B cell (primary cell): ENCODE measurements at regions of chr2 and their contacts with region 1.

Region 1: GRCh38 chr2:201118121-201118960 is 2.4 kb downstream of the CFLAR start:
- DNase-seq: peak; percentile 95
- ATAC-seq: peak; percentile 64
- H3K4me3 ChIP-seq: peak overlapping the region; percentile 66 to 100 (median 97)
- H3K4me3 Mint-ChIP-seq: peak overlapping the region; percentile 98
- H3K27ac ChIP-seq: peak overlapping the region; percentile 94 to 96
- H3K27ac Mint-ChIP-seq: peak overlapping the region; percentile 98
- H3K4me1 ChIP-seq: peaks cover 63 to 72% of the 10 kb centered on the region in 2 donors
- H3K4me1 Mint-ChIP-seq: peaks cover 72% of the 10 kb centered on the region
- H3K27me3 ChIP-seq: no peaks in the 10 kb centered on the region
- H3K27me3 Mint-ChIP-seq: no peaks in the 10 kb centered on the region
- CTCF ChIP-seq: peak; percentile 55

Region 2: GRCh38 chr2:200713003-200713703 is 405.2 kb before region 1 on chr2:
- CTCF ChIA-PET with region 1: interaction called, 3 read pairs
- POLR2A ChIA-PET with region 1: interaction called, 3 read pairs
- intact Hi-C with region 1: loop called (anchors 5 kb)
- DNase-seq: peak; percentile 91
- ATAC-seq: peak; percentile 99
- H3K4me3 ChIP-seq: peak overlapping the region in 4 of 5 experiments; percentile 5 to 52 (median 16)
- H3K4me3 Mint-ChIP-seq: peak overlapping the region; percentile 83
- H3K27ac ChIP-seq: peak overlapping the region; percentile 82 to 93
- H3K27ac Mint-ChIP-seq: peak overlapping the region; percentile 98
- H3K4me1 ChIP-seq: peaks cover 5 to 6% of the 10 kb centered on the region in 2 donors
- H3K4me1 Mint-ChIP-seq: peaks cover 15% of the 10 kb centered on the region
- H3K27me3 ChIP-seq: no peaks in the 10 kb centered on the region
- H3K27me3 Mint-ChIP-seq: peaks cover 10% of the 10 kb centered on the region
- CTCF ChIP-seq: peak; percentile 83

Region 3: GRCh38 chr2:200888704-200889625 is 229.4 kb before region 1 on chr2 and contains the starts of genes NIF3L1 and PPIL3:
- CTCF ChIA-PET with region 1: no interaction called
- POLR2A ChIA-PET with region 1: interaction called, 6 read pairs
- intact Hi-C with region 1: loop called (anchors 2 kb)
- DNase-seq: peak; percentile 98
- ATAC-seq: peak; percentile 81
- H3K4me3 ChIP-seq: peak within 1 kb of the TSS; percentile 76 to 99 (median 87)
- H3K4me3 Mint-ChIP-seq: peak within 1 kb of the TSS; percentile 95
- H3K27ac ChIP-seq: peak within 1 kb of the TSS; percentile 90 to 93
- H3K27ac Mint-ChIP-seq: peak within 1 kb of the TSS; percentile 98
- H3K4me1 ChIP-seq: peaks cover 15 to 28% of the 10 kb centered on the region in 2 donors
- H3K4me1 Mint-ChIP-seq: peaks cover 43% of the 10 kb centered on the region
- H3K27me3 ChIP-seq: no peaks in the 10 kb centered on the region
- H3K27me3 Mint-ChIP-seq: no peaks in the 10 kb centered on the region
- CTCF ChIP-seq: no peak
- total RNA-seq, gene NIF3L1: 26.7 and 32.9 TPM in 2 replicates
- total RNA-seq, gene PPIL3: 55.5 and 57.9 TPM in 2 replicates

Region 4: GRCh38 chr2:201130524-201131186 is 12.3 kb after region 1 on chr2:
- CTCF ChIA-PET with region 1: interaction called, 20 read pairs
- POLR2A ChIA-PET with region 1: interaction called, 16 read pairs
- intact Hi-C with region 1: loop called (anchors 1 kb)
- DNase-seq: peak; percentile 31
- ATAC-seq: no peak
- H3K4me3 ChIP-seq: no peak overlapping the region
- H3K4me3 Mint-ChIP-seq: peak overlapping the region; percentile 60
- H3K27ac ChIP-seq: peak overlapping the region; percentile 24 to 45
- H3K27ac Mint-ChIP-seq: peak overlapping the region; percentile 82
- H3K4me1 ChIP-seq: peaks cover 63 to 67% of the 10 kb centered on the region in 2 donors
- H3K4me1 Mint-ChIP-seq: peaks cover 71% of the 10 kb centered on the region
- H3K27me3 ChIP-seq: no peaks in the 10 kb centered on the region
- H3K27me3 Mint-ChIP-seq: no peaks in the 10 kb centered on the region
- CTCF ChIP-seq: no peak

Region 5: DNA sequence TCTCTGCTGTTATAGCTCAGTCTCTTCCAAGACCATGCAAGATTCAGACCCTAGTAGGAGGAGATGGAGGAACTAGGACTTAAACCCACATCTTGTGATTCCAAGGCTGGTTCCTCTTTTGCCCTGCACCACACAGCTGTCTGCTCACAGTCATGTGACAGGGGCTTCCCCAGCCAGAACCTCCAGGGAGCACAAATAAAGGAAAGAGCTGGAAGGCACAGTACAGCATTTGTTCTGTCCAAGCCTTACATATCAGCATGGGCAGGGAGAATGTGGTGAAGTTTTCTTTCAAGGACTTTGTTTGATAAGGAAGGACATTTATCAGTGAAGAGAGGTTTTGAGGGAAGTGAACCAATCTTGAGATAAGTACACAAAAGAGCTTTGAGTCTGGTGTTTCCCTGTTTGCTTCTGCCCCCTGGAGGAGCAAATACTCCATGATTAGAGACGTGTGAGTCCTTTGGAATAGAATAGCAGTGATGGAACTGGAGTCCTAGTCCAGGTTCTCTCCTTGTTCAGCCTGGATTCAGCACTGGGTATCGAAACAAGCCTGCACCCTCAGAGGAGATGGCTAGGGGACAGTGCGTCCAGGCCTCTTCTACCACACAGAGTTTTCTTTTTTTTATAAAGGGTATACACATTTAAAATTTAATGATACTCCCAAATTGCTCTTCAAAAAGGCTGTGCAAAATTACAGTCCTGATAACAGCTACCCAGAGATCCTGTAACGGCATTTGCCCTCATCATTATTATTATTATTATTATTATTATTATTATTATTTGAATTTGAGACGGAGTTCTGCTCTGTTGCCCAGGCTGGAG is 40.0 kb after region 1 on chr2:
- CTCF ChIA-PET with region 1: interaction called, 100 read pairs
- POLR2A ChIA-PET with region 1: interaction called, 55 read pairs
- intact Hi-C with region 1: loop called (anchors 1 kb)
- DNase-seq: peak; percentile 95
- ATAC-seq: peak; percentile 91
- H3K4me3 ChIP-seq: peak overlapping the region in 1 of 5 experiments; percentile 9
- H3K4me3 Mint-ChIP-seq: peak overlapping the region; percentile 64
- H3K27ac ChIP-seq: peak overlapping the region; percentile 84 to 85
- H3K27ac Mint-ChIP-seq: peak overlapping the region; percentile 90
- H3K4me1 ChIP-seq: peaks cover 43 to 47% of the 10 kb centered on the region in 2 donors
- H3K4me1 Mint-ChIP-seq: peaks cover 52% of the 10 kb centered on the region
- H3K27me3 ChIP-seq: no peaks in the 10 kb centered on the region
- H3K27me3 Mint-ChIP-seq: no peaks in the 10 kb centered on the region
- CTCF ChIP-seq: peak; percentile 69

Region 6: GRCh38 chr2:201257956-201258665 is 139.8 kb after region 1 on chr2:
- CTCF ChIA-PET with region 1: interaction called, 3 read pairs
- POLR2A ChIA-PET with region 1: interaction called, 14 read pairs
- intact Hi-C with region 1: loop called (anchors 2 kb)
- DNase-seq: peak; percentile 94
- ATAC-seq: peak; percentile 67
- H3K4me3 ChIP-seq: peak overlapping the region; percentile 39 to 90 (median 58)
- H3K4me3 Mint-ChIP-seq: peak overlapping the region; percentile 87
- H3K27ac ChIP-seq: peak overlapping the region; percentile 97 to 98
- H3K27ac Mint-ChIP-seq: peak overlapping the region; percentile 99
- H3K4me1 ChIP-seq: peaks cover 58 to 84% of the 10 kb centered on the region in 2 donors
- H3K4me1 Mint-ChIP-seq: peaks cover 73% of the 10 kb centered on the region
- H3K27me3 ChIP-seq: no peaks in the 10 kb centered on the region
- H3K27me3 Mint-ChIP-seq: no peaks in the 10 kb centered on the region
- CTCF ChIP-seq: no peak

Region 7: DNA sequence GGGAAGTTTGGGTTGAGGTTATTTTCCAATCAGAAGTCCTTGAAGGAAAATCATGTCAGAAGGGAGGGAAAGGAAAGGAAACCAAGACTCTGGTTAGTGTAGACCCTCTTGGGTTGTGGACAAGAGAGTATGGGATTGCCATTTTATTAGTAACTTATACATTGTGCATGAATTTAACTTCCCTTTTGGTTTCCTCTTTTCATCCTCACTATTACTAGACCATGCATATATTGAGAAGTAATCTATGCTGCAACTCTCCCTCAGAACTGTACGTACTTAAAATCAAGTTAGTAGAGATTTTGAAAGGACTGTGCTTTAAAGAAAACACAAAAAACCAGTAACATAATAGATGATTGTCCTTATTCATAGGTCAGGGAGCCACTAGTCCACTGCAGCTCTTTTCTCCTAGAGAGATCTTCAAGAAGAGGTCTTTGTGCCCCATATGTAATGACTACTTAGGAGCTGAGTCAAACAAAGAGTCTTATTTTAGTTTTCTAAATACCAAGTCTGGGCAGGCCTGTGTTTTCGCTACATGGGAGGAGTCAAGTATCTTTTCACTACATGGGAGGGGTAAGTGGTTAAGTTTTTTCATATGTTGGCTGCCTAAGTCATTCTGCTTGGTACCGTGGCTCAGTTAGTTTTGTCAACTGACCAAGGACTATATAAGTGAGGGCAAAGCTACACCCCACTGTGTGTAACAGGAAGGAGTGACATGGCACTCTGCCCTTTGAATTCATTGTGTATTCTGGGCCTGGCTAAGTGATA is 1491.2 kb after region 1 on chr2:
- CTCF ChIA-PET with region 1: no interaction called
- POLR2A ChIA-PET with region 1: no interaction called
- intact Hi-C with region 1: no loop called
- DNase-seq: peak; percentile 48
- ATAC-seq: peak; percentile 74
- H3K4me3 ChIP-seq: peak overlapping the region in 2 of 5 experiments; percentile 3 to 45
- H3K4me3 Mint-ChIP-seq: peak overlapping the region; percentile 58
- H3K27ac ChIP-seq: peak overlapping the region; percentile 58 to 79
- H3K27ac Mint-ChIP-seq: peak overlapping the region; percentile 90
- H3K4me1 ChIP-seq: peaks cover 30 to 32% of the 10 kb centered on the region in 2 donors
- H3K4me1 Mint-ChIP-seq: peaks cover 35% of the 10 kb centered on the region
- H3K27me3 ChIP-seq: no peaks in the 10 kb centered on the region
- H3K27me3 Mint-ChIP-seq: no peaks in the 10 kb centered on the region
- CTCF ChIP-seq: no peak